Mammary epithelial cell (primary cell): ENCODE measurements at regions of chr17 and their contacts with region 1.

Region 1: DNA sequence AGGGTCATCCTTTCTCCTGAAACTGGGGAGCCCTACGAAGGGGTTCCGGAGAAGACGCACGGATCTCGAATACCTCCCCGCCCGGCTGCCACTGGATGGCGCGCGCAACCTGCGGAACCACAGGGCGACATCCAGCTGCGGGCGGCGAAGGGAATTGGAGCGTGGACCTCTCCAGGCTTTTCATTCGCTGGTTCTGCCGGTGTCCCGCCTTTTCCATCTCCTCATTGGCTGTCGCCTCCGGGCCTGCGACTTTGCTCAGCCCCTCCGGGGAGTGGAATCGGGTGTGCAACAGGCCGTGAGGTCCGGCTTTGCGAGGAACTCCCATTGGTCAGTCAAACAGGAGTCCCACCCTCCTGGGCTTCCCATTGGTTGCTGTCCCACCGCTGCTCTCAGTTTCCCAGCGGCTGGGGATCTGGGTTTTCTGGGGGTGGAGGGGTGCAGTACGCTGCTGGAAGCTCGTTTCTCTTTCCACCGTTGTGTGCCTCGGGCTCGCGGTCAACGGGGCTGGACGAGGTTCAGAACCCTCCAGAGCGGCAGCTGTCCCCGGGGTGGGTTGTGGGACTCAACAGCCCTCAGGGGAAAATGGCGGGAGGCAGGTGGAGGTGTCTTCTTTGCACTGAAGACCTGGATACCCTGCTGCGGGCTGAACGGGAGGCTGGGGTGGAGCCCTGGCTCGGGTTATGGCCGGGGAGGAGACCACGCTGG is 14.5 kb downstream of the OR1D5 start:
- DNase-seq: peak; percentile 96
- H3K4me3 ChIP-seq: peak overlapping the region; percentile 84 to 89 (median 86)
- H3K27ac ChIP-seq: peak overlapping the region; percentile 3
- H3K4me1 ChIP-seq: peaks cover 10% of the 10 kb centered on the region
- H3K27me3 ChIP-seq: no peaks in the 10 kb centered on the region
- CTCF ChIP-seq: peak; percentile 66 to 90

Region 2: DNA sequence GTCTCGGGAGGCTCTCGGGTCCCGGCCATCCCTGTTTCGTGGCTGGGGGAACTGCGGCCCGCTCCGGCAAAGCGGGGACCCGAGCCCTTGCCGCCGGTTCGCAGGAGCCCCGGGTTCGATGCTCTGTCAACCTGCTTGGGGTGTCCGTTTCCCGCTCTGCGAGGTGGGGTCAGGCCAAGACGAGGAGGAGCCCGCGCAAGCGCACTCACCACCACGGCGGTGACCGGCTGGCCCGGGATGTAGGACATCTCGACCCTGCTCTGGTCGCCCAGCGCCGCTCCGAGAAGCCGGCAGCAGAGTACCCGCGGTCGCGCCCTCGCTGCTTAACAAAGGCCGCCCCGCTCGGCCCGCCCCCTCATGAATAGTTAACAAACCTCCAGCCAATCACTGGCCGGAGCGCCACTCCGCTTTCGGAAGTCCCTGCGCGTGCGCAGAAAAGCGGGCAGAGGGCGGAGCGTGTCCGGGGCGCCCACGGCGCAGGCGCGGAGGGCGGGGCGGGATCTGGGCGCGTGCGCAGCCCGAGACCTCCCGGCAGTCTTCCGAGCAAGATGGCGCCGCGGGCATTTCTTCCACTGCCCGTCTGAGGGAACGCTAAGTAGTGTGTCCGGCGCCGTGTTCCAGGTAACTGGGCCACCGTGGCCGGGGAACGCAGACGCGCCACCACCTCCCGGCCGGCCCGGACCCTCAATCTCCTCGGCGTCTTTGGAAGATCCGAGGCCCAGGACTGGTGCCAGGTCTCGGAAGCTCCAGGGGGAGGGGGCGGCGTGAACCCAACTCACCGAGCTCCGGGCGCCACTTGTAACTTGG is 619.6 kb after region 1 on chr17 and contains the starts of genes EMC6 and TAX1BP3:
- CTCF ChIA-PET with region 1: no interaction called
- dilution Hi-C with region 1: no loop called
- in situ Hi-C with region 1: loop called in 1 of 2 experiments (anchors 25 kb)
- intact Hi-C with region 1: no loop called
- DNase-seq: peak; percentile 97
- H3K4me3 ChIP-seq: peak within 1 kb of the TSS; percentile 91 to 96 (median 94)
- H3K27ac ChIP-seq: peak within 1 kb of the TSS; percentile 78
- H3K4me1 ChIP-seq: peaks cover 23% of the 10 kb centered on the region
- H3K27me3 ChIP-seq: no peaks in the 10 kb centered on the region
- CTCF ChIP-seq: no peak
- total RNA-seq, gene EMC6: 11.0 to 57.9 TPM
- total RNA-seq, gene TAX1BP3: 188 to 213 TPM

Region 3: DNA sequence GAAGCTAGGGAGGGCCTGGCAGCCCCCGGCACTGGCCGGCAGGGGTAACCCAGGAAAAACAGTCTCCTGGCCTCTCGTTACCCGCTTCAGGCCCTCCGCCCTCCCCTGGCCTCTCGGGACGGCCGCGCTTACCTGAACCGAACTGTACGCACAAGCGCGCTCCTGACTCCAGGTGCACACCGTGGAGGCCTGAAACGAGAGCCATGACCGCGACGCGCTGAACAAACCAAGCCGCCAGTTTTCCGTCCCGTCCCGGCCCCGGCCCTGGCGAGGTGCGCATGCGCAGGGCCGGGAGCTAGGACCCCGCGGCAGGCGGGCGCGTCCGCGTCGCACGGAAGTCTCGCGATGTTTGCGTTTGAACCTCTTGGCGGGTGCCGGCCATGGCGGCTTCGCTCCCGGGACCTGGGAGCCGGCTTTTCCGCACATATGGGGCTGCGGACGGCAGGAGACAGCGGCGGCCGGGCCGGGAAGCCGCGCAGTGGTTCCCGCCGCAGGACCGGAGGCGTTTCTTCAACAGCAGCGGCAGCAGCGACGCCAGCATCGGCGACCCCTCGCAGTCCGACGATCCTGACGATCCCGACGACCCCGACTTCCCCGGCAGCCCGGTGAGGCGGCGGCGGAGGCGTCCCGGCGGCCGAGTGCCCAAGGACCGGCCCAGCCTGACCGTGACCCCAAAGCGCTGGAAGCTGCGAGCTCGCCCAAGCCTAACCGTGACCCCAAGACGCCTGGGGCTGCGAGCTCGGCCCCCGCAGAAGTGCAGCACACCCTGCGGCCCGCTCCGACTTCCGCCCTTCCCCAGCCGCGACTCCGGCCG is 674.8 kb after region 1 on chr17 and contains the start of gene HASPIN:
- CTCF ChIA-PET with region 1: no interaction called
- dilution Hi-C with region 1: no loop called
- in situ Hi-C with region 1: no loop called
- intact Hi-C with region 1: loop called (anchors 5 kb)
- DNase-seq: peak; percentile 88
- H3K4me3 ChIP-seq: peak within 1 kb of the TSS; percentile 66 to 95 (median 92)
- H3K27ac ChIP-seq: peak within 1 kb of the TSS; percentile 43
- H3K4me1 ChIP-seq: peaks cover 32% of the 10 kb centered on the region
- H3K27me3 ChIP-seq: no peaks in the 10 kb centered on the region
- CTCF ChIP-seq: peak; percentile 15 to 27
- total RNA-seq, gene HASPIN: 2.0 to 8.9 TPM

Region 4: DNA sequence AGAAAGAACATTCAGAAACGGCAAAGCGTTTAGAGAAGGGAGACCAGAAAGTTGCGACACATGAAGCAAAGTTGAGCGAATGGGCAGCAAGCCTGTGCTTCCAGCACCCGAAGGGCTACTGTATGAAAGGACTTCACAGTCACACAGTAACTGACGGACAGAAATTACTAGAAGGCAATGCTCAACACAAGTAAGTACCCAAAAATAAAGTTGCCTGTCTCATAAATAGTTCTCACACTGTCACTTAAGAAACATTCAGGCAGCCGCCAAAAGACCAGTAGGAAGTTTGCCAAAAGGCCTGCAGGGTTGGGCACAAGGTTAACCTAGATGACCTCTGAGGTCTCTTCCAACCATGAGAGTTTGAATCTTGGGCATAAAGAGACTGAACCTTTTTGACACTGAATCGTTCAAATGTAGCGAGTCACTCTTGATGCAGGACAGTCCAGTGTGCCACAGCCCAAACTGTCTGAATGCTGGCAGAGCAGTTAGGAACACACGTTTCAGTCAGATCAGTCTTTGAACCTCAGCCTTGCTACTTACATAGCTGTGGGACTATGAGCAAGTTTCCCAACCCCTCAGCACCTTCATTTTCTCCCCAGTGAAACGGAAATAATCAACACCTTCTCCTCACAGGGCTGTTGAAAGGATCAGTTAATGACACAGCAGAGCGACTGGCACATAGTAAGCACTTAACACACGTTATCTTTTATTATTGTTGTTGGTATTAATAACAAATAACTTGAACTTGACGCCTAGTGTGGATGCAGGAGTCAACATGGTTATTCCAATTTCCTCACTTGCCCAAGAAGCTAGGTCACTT is 786.7 kb after region 1 on chr17:
- CTCF ChIA-PET with region 1: no interaction called
- dilution Hi-C with region 1: no loop called
- in situ Hi-C with region 1: no loop called
- intact Hi-C with region 1: loop called (anchors 10 kb)
- DNase-seq: no peak
- H3K4me3 ChIP-seq: no peak overlapping the region
- H3K27ac ChIP-seq: no peak overlapping the region
- H3K4me1 ChIP-seq: no peaks in the 10 kb centered on the region
- H3K27me3 ChIP-seq: no peaks in the 10 kb centered on the region
- CTCF ChIP-seq: no peak